ENCODE measurements at regions of chr6 and their contacts with region 1.

Region 1: GRCh38 chr6:131627724-131628682 is at the start of gene MED23:
- DNase-seq: peak; percentile 95
- ATAC-seq: peak; percentile 98
- H3K4me3 ChIP-seq: peak within 1 kb of the TSS; percentile 82 to 97 (median 85)
- H3K27ac ChIP-seq: peak within 1 kb of the TSS; percentile 82
- H3K4me1 ChIP-seq: peaks cover 44% of the 10 kb centered on the region
- H3K27me3 ChIP-seq: no peaks in the 10 kb centered on the region; a peak in 1 of 5 replicates
- CTCF ChIP-seq: peak; percentile 100
- EP300 ChIP-seq: peak in 1 of 2 experiments; percentile 87; a peak in 2 of 4 replicates
- POLR2A ChIP-seq: peak; percentile 86 to 88; a peak in 3 of 4 replicates
- RAD21 ChIP-seq: peak; percentile 100
- total RNA-seq, gene MED23: 30.0 and 34.9 TPM in 2 replicates

Region 2: DNA sequence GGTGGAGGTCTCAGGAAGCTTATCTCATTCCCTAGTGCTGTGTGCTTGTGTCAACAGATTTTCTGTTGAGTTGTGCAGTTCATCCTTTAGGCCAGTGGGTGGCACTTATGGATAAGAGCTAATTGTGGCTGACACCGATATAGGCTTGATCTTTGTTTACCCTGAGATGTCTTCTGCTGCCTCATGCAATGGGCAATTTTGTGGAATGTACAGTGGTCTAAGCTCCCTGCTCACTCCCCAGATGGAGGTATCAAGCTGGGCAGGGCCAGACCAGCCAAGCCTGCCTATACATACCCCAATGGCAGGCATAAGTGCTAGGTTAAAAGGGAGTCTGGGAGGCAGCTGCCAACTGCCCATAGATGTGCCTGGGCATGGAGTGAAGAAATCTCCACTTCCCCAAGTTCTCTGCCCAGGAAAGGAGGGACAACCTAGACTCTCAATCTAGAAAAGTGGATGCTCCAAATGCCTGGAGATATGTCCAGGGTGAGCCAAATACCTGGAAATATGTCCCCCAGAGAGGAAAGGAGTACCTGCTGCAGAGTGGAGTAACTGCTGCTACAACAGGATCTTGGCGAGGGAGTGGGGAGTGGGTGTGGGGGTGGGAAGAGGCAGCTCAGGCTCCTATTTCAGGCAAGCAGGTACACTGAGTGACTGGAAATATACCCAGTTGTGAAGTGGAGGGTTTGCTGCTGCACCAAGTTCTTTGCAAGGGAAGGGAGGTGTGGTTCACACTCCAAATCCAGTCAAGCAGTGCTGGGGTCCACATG is 108.2 kb before region 1 on chr6:
- CTCF ChIA-PET with region 1: interaction called, 17 read pairs
- POLR2A ChIA-PET with region 1: interaction called, 5 read pairs
- in situ Hi-C with region 1: no loop called
- intact Hi-C with region 1: loop called (anchors 10 kb)
- DNase-seq: peak; percentile 76
- ATAC-seq: peak; percentile 99
- H3K4me3 ChIP-seq: no peak overlapping the region
- H3K27ac ChIP-seq: no peak overlapping the region
- H3K4me1 ChIP-seq: peaks cover 8% of the 10 kb centered on the region; the same call in 1 of the 2 replicates
- H3K27me3 ChIP-seq: no peaks in the 10 kb centered on the region
- CTCF ChIP-seq: peak; percentile 98
- EP300 ChIP-seq: no peak
- POLR2A ChIP-seq: no peak
- RAD21 ChIP-seq: peak; percentile 88

Region 3: DNA sequence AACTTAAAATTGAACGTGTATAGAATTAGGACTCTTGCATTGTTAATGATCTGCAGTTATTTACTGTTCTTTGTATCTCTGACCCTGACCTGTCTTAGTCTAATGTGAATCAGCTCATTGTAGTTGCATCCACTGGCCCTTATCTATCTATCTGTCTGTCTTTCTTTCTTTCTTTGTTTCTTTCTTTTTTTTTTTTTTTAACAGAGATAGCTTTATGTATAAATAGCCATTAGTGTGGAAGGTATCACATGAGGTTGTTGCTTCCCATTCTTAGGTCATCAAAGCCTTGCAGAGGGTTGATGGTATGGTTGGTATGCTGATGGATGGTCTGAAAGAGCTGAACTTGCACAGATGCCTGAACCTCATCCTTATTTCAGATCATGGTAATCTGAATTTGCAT is 239.7 kb after region 1 on chr6:
- CTCF ChIA-PET with region 1: no interaction called
- POLR2A ChIA-PET with region 1: no interaction called
- in situ Hi-C with region 1: no loop called
- intact Hi-C with region 1: loop called (anchors 2 kb)
- DNase-seq: peak; percentile 92
- ATAC-seq: peak; percentile 75
- H3K4me3 ChIP-seq: no peak overlapping the region
- H3K27ac ChIP-seq: peak overlapping the region; percentile 28
- H3K4me1 ChIP-seq: peaks cover 39% of the 10 kb centered on the region
- H3K27me3 ChIP-seq: no peaks in the 10 kb centered on the region
- CTCF ChIP-seq: no peak
- EP300 ChIP-seq: peak in 1 of 2 experiments; percentile 63; a peak in 2 of 4 replicates
- POLR2A ChIP-seq: no peak
- RAD21 ChIP-seq: no peak

Region 4: DNA sequence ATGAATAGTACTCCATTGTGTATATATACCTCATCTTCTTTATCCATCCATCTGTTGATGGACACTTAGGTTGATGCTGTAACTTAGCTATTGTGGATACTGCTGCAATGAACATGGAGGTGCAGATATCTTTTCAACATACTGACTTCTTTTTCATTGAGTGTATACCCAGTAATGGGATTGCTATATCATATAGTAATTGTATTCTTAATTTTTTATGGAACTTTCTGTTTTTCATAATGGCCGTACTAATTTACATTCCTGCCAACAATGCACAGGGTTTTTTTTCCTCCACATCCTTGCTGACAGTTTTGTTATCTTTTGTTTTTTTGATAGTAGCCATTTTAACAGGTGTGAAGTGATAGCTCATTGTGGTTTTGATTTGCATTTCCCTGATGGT is 318.0 kb after region 1 on chr6:
- CTCF ChIA-PET with region 1: no interaction called
- POLR2A ChIA-PET with region 1: no interaction called
- in situ Hi-C with region 1: no loop called
- intact Hi-C with region 1: no loop called
- DNase-seq: no peak
- ATAC-seq: peak; percentile 1; the same call in 2 of the 3 replicates
- H3K4me3 ChIP-seq: no peak overlapping the region
- H3K27ac ChIP-seq: no peak overlapping the region
- H3K4me1 ChIP-seq: peaks cover 31% of the 10 kb centered on the region
- H3K27me3 ChIP-seq: peaks cover 0 to 3% of the 10 kb centered on the region in 2 experiments; a peak in 1 of 5 replicates
- CTCF ChIP-seq: no peak
- EP300 ChIP-seq: no peak
- POLR2A ChIP-seq: no peak
- RAD21 ChIP-seq: no peak

Measured in HepG2 (cell line).